Calu3 (cell line): ENCODE measurements at regions of chr5 and their contacts with region 1.

Region 1: GRCh38 chr5:9207817-9208418 is 338.0 kb downstream of the SEMA5A start:
- DNase-seq: no peak
- H3K4me3 Mint-ChIP-seq: no peak overlapping the region
- H3K27ac Mint-ChIP-seq: no peak overlapping the region
- H3K4me1 Mint-ChIP-seq: no peaks in the 10 kb centered on the region
- H3K27me3 Mint-ChIP-seq: no peaks in the 10 kb centered on the region
- CTCF ChIP-seq: no peak

Region 2: GRCh38 chr5:8756498-8757084 is 451.3 kb before region 1 on chr5:
- CTCF ChIA-PET with region 1: no interaction called
- intact Hi-C with region 1: loop called (anchors 1 kb)
- DNase-seq: peak; percentile 9
- H3K4me3 Mint-ChIP-seq: no peak overlapping the region
- H3K27ac Mint-ChIP-seq: no peak overlapping the region
- H3K4me1 Mint-ChIP-seq: no peaks in the 10 kb centered on the region
- H3K27me3 Mint-ChIP-seq: no peaks in the 10 kb centered on the region
- CTCF ChIP-seq: no peak

Region 3: GRCh38 chr5:8864053-8864452 is 343.9 kb before region 1 on chr5:
- CTCF ChIA-PET with region 1: no interaction called
- intact Hi-C with region 1: loop called (anchors 10 kb)
- DNase-seq: peak; percentile 18
- H3K4me3 Mint-ChIP-seq: no peak overlapping the region
- H3K27ac Mint-ChIP-seq: no peak overlapping the region
- H3K4me1 Mint-ChIP-seq: no peaks in the 10 kb centered on the region
- H3K27me3 Mint-ChIP-seq: no peaks in the 10 kb centered on the region
- CTCF ChIP-seq: no peak

Region 4: GRCh38 chr5:9686211-9686610 is 478.3 kb after region 1 on chr5:
- CTCF ChIA-PET with region 1: no interaction called
- intact Hi-C with region 1: no loop called
- DNase-seq: no peak
- H3K4me3 Mint-ChIP-seq: no peak overlapping the region
- H3K27ac Mint-ChIP-seq: no peak overlapping the region
- H3K4me1 Mint-ChIP-seq: no peaks in the 10 kb centered on the region
- H3K27me3 Mint-ChIP-seq: no peaks in the 10 kb centered on the region
- CTCF ChIP-seq: no peak